Cardiac septum (tissue), 1 donor: ENCODE measurements at regions of chr11 and their contacts with region 1.

Region 1: DNA sequence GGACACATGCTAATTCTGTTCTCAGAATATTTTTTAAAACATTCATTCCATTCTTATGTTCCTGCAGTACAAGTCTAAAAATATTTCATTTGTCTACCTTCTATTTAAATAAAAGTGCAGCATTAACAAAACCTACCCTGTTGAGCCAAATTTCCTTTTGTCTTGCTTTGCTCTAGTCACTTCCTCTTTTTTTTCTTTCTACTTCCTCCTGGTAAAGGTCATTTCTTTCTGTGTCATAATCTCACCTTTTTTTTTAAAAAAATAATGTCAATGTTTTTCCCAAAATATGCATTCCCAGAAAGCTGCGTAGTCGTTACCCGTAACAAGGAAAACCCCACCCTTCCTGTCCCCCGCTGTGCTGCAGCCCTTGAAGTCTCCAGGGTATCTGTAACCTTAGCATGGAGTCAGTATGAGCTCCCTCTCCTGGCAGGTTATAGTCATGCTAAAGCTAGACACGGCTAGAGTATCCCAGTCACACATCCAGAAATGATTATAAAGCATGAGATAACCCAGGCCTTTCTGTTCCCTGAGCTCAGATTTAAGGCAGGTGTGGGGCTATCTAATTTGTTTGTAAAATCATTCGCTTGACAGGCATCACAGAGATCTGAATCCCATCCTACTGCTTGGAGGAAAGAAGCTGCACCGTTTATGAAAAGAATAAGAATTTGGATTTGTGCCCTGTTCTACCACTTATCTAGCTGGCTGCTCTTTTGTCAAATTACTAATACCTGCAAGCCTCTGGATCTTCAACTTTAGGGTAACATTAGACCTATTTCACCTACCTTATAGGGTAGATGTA is 51.1 kb upstream of the EED start:
- DNase-seq: peak; percentile 87

Region 2: DNA sequence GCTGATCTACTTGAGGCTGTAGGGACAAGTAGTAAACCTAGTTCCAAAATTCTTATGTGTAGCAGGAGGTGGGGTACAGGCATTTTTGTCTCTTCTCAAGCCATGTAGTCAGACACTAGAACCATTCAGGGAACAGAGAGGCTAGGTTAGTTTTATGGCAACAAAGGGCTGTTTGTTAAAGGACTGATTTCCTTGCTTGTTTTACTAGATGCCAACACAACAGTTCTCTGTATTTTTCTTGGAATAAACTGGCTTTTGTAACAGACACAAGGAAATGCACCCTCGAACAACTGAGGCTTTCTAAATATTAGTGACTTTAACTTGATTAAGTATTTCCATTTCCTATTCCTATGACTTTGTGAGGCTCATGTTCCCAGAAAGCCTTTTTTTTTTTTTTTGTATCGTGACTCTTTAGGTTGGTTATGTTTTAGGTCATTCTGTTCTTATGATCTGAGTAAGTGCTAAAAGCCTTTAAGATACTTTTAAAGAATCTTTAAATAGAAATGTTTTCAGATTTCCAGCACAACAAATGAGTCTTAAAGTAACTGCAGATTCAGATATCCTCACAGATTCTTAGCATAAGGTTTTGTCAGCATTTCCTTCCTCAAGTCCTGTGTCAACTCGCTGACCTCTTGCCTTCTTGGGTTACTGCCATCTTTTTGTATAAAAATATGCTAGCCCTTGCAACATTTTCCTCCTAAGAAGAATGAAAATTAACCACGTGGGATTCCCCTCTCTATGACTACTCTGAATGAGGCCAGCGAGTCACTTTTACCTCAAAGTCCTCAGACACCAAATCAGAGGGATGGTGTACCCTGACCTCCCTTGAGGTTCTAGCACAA is 245.8 kb before region 1 on chr11:
- intact Hi-C with region 1: loop called (anchors 5 kb)
- DNase-seq: no peak

Region 3: GRCh38 chr11:86041975-86042378 is 151.5 kb before region 1 on chr11:
- intact Hi-C with region 1: loop called (anchors 2 kb)
- DNase-seq: no peak

Region 4: DNA sequence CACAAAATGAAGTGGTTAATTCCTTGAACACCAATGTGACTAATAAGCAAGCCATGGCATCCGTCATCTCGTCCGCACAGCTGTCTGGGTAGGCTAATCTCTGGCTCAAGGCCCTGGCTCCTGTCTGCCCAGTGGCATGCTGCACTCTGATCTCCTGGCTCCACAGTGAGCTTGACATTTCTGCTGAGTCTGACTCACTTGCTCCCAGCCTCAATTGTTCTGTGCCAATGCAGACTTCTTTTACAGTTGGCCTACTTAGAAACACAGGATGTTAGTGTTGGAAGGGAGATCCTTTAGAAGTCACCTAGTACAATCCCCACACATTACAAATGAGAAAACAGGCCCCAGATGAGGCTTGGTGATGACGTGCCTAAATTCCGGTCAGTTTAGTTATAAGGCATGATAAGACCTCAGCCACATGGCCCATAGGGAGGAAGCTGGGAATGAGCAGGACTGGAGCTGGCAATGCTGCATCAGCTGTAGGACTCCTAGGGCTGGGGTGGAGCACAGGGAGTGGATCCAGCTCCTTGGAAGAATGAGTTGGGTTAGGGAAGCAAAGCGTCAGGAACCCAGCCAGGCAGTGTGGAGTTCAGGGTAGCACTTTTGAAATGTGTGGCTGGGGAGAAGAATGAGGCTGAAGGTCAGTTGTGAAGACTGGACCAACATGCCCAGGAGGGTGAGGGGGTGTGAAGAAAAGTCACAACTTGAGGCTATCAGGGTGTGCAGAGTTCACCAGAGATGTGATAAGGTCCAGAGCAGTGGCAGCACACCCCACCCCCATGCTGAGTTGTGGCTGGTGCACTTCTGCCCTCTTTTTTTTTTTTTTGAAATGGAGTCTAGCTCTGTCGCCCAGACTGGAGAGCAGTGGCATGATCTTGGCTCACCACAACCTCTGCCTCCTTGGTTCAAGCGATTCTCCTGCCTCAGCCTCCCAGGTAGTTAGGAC is 19.1 kb before region 1 on chr11:
- intact Hi-C with region 1: loop called (anchors 2 kb)
- DNase-seq: peak; percentile 90